Gastrocnemius medialis (tissue), 4 donors: ENCODE measurements at regions of chr14 and their contacts with region 1.

Region 1: GRCh38 chr14:69766984-69767368 is at the start of gene SRSF5:
- DNase-seq: peak; percentile 94 to 95
- ATAC-seq: peak; percentile 95
- H3K4me3 ChIP-seq: peak within 1 kb of the TSS; percentile 79 to 99 (median 92)
- H3K27ac ChIP-seq: peak within 1 kb of the TSS; percentile 97 to 100 (median 99)
- H3K4me1 ChIP-seq: peaks cover 34 to 36% of the 10 kb centered on the region in 2 donors
- H3K27me3 ChIP-seq: no peaks in the 10 kb centered on the region
- CTCF ChIP-seq: no peak
- POLR2A ChIP-seq: peak; percentile 95 to 97
- total RNA-seq, gene SRSF5: 57.5 to 113 (median 84.6) TPM

Region 2: GRCh38 chr14:69398053-69398817 is 368.7 kb before region 1 on chr14 and contains the starts of genes ERH and SLC39A9:
- in situ Hi-C with region 1: loop called in 1 of 4 experiments (anchors 10 kb)
- intact Hi-C with region 1: loop called (anchors 5 kb)
- DNase-seq: peak; percentile 94 to 96
- ATAC-seq: peak; percentile 99
- H3K4me3 ChIP-seq: peak within 1 kb of the TSS; percentile 82 to 91 (median 84)
- H3K27ac ChIP-seq: peak within 1 kb of the TSS; percentile 89 to 94 (median 91)
- H3K4me1 ChIP-seq: peaks cover 37 to 42% of the 10 kb centered on the region in 2 donors
- H3K27me3 ChIP-seq: no peaks in the 10 kb centered on the region
- CTCF ChIP-seq: no peak
- POLR2A ChIP-seq: peak; percentile 59 to 71
- total RNA-seq, gene ERH: 46.7 to 49.2 (median 48.1) TPM
- total RNA-seq, gene SLC39A9: 20.6 to 23.2 (median 21.8) TPM

Region 3: GRCh38 chr14:69611201-69612011 is 155.6 kb before region 1 on chr14 and contains the start of gene SUSD6:
- in situ Hi-C with region 1: no loop called
- intact Hi-C with region 1: loop called (anchors 1 kb)
- DNase-seq: peak; percentile 81 to 88
- ATAC-seq: peak; percentile 81 to 83
- H3K4me3 ChIP-seq: peak within 1 kb of the TSS; percentile 54 to 89 (median 74)
- H3K27ac ChIP-seq: peak within 1 kb of the TSS; percentile 91 to 99 (median 96)
- H3K4me1 ChIP-seq: peaks cover 49% of the 10 kb centered on the region in 2 donors
- H3K27me3 ChIP-seq: no peaks in the 10 kb centered on the region
- CTCF ChIP-seq: no peak
- POLR2A ChIP-seq: peak; percentile 78 to 83
- total RNA-seq, gene SUSD6: 11.9 to 26.3 (median 16.2) TPM

Region 4: DNA sequence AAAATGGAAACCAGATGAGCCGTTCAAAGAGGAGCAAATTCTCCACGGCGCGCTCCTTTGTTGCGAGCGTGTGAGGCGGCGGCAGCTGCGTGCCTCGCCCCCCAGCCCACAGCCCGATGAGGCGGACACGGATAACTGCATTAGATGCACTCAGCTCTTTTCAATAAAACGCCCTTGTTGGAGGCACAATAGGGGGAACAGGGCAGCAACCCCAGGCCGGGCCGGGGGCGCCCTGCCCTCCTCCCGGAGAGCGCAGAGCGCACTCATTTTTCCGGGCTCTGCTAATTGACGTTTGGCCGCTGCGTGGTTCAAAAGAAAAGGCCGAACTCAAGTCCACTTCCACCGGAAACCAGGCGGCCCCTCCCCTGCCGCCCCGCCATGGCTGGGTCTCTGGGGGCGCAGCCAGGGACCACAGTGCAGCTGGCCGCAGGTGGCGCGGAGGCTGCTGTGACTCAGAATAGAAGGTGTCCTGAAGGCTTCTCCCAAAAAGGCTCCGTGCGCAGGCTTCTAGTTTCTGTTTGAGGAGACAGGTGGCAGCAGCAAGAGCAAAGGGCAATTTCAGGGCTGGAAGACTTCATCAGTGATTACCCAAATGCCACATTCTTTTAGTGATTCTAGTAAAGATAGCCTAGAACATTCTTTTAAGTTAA is 83.2 kb after region 1 on chr14:
- in situ Hi-C with region 1: no loop called
- intact Hi-C with region 1: loop called (anchors 2 kb)
- DNase-seq: peak; percentile 7 to 71
- ATAC-seq: peak; percentile 63 to 68
- H3K4me3 ChIP-seq: peak overlapping the region; percentile 36 to 51 (median 43)
- H3K27ac ChIP-seq: peak overlapping the region; percentile 78 to 85 (median 80)
- H3K4me1 ChIP-seq: peaks cover 14 to 16% of the 10 kb centered on the region in 2 donors
- H3K27me3 ChIP-seq: no peaks in the 10 kb centered on the region
- CTCF ChIP-seq: no peak
- POLR2A ChIP-seq: peak; percentile 48 to 59

Region 5: DNA sequence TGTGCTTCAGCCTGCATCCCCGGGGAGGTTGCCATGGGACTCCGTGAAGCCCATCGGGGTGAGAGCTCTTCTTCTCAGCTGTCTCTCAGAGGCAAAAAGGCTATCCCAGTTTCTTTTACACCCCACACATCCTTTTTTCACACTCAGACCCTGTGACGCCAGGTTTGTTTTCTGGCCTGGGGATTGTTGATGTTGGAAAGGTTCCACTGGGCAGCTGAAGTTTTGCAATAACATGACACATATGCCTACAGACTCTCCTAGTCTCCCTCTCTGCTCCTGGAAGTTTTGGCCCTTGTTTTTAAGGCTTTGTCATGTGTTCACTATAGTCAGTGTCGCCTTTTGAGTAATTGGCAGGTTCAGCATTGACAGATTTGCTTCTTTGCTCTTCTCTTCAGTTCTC is 230.9 kb after region 1 on chr14:
- in situ Hi-C with region 1: no loop called
- intact Hi-C with region 1: no loop called
- DNase-seq: no peak
- ATAC-seq: peak; percentile 79 to 82
- H3K4me3 ChIP-seq: no peak overlapping the region
- H3K27ac ChIP-seq: no peak overlapping the region
- H3K4me1 ChIP-seq: no peaks in the 10 kb centered on the region
- H3K27me3 ChIP-seq: no peaks in the 10 kb centered on the region
- CTCF ChIP-seq: no peak
- POLR2A ChIP-seq: no peak

Region 6: GRCh38 chr14:70600382-70601157 is 833.6 kb after region 1 on chr14 and contains the start of gene MED6:
- in situ Hi-C with region 1: no loop called
- intact Hi-C with region 1: loop called (anchors 5 kb)
- DNase-seq: peak; percentile 87 to 91
- ATAC-seq: peak; percentile 98 to 100
- H3K4me3 ChIP-seq: peak within 1 kb of the TSS; percentile 77 to 98 (median 92)
- H3K27ac ChIP-seq: peak within 1 kb of the TSS; percentile 78 to 89 (median 80)
- H3K4me1 ChIP-seq: peaks cover 15 to 18% of the 10 kb centered on the region in 2 donors
- H3K27me3 ChIP-seq: no peaks in the 10 kb centered on the region
- CTCF ChIP-seq: no peak
- POLR2A ChIP-seq: peak in 1 of 2 donors; percentile 31
- total RNA-seq, gene MED6: 13.9 to 25.0 (median 20.2) TPM